ENCODE measurements at regions of chr1 and their contacts with region 1.

Region 1: DNA sequence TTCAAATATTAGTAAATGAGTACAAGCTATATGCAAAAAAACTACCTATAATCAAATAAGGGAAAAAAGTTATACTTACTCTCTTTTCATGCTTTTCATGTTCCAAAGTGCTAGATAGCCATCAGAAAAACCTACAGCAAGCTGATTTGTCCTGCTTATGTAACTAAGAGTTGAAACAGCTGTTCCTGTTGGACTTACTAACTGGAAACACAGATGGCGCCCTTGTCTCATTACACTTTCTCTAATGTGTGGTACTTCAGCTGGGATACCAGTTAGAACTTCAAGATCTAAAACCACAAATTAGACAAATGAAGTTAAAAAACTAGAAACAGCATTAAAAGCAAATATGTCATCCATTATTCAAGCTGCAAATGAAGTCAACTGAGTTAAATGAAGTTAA is 24.3 kb downstream of the AHCTF1 start:
- DNase-seq: peak; percentile 50
- ATAC-seq: no peak
- H3K4me3 ChIP-seq: no peak overlapping the region
- H3K4me3 Mint-ChIP-seq: no peak overlapping the region
- H3K27ac ChIP-seq: no peak overlapping the region
- H3K27ac Mint-ChIP-seq: no peak overlapping the region
- H3K4me1 ChIP-seq: no peaks in the 10 kb centered on the region
- H3K4me1 Mint-ChIP-seq: no peaks in the 10 kb centered on the region
- H3K27me3 ChIP-seq: no peaks in the 10 kb centered on the region
- H3K27me3 Mint-ChIP-seq: no peaks in the 10 kb centered on the region
- CTCF ChIP-seq: peak; percentile 69

Region 2: GRCh38 chr1:246417152-246417812 is 490.2 kb before region 1 on chr1:
- CTCF ChIA-PET with region 1: no interaction called
- POLR2A ChIA-PET with region 1: no interaction called
- intact Hi-C with region 1: no loop called
- DNase-seq: no peak
- ATAC-seq: no peak
- H3K4me3 ChIP-seq: no peak overlapping the region
- H3K4me3 Mint-ChIP-seq: no peak overlapping the region
- H3K27ac ChIP-seq: no peak overlapping the region
- H3K27ac Mint-ChIP-seq: no peak overlapping the region
- H3K4me1 ChIP-seq: no peaks in the 10 kb centered on the region
- H3K4me1 Mint-ChIP-seq: peaks cover 12% of the 10 kb centered on the region
- H3K27me3 ChIP-seq: no peaks in the 10 kb centered on the region
- H3K27me3 Mint-ChIP-seq: no peaks in the 10 kb centered on the region
- CTCF ChIP-seq: no peak

Region 3: DNA sequence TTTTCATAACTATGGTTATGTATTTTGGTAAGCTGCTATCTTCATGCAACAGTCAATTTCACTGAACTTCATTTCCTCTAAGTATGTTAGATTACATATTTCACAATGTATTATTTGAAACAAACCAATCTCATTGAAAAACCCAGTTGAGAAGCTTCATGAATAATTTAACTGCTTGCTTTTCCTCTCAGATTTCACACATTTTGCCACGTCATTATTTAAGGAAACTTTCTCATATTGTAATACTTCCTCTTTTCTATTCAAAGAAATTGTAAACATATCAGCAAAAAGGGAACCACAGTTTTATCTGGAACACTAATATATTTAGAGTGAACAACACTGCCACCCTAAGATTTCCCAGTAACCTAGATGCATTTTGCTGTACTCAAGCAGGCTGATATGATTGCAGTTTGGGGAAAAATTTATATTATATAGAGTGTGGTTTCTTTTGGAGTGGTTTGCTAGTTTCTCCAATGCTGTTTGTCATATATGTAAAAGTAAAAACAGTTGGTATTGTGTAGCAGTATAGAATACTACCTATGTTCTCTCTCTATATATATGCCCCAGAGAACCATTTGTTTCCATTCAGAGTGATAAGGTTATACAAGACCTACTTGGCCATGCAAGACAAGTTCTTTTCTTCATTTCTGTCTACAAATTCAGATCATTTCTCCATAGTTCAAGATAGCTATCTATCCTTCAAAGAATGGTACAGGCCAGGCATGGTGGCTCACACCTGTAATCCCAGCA is 52.6 kb after region 1 on chr1:
- CTCF ChIA-PET with region 1: interaction called, 11 read pairs
- POLR2A ChIA-PET with region 1: no interaction called
- intact Hi-C with region 1: loop called (anchors 1 kb)
- DNase-seq: peak; percentile 65
- ATAC-seq: peak; percentile 76
- H3K4me3 ChIP-seq: peak overlapping the region in 2 of 5 experiments; percentile 6 to 37
- H3K4me3 Mint-ChIP-seq: peak overlapping the region; percentile 66
- H3K27ac ChIP-seq: peak overlapping the region; percentile 2 to 3
- H3K27ac Mint-ChIP-seq: peak overlapping the region; percentile 68
- H3K4me1 ChIP-seq: peaks cover 15 to 23% of the 10 kb centered on the region in 2 donors
- H3K4me1 Mint-ChIP-seq: peaks cover 38% of the 10 kb centered on the region
- H3K27me3 ChIP-seq: no peaks in the 10 kb centered on the region
- H3K27me3 Mint-ChIP-seq: no peaks in the 10 kb centered on the region
- CTCF ChIP-seq: peak; percentile 33

Region 4: GRCh38 chr1:246971090-246971721 is 63.7 kb after region 1 on chr1:
- CTCF ChIA-PET with region 1: interaction called, 27 read pairs
- POLR2A ChIA-PET with region 1: no interaction called
- intact Hi-C with region 1: loop called (anchors 2 kb)
- DNase-seq: peak; percentile 47
- ATAC-seq: no peak
- H3K4me3 ChIP-seq: no peak overlapping the region
- H3K4me3 Mint-ChIP-seq: no peak overlapping the region
- H3K27ac ChIP-seq: no peak overlapping the region
- H3K27ac Mint-ChIP-seq: no peak overlapping the region
- H3K4me1 ChIP-seq: no peaks in the 10 kb centered on the region
- H3K4me1 Mint-ChIP-seq: no peaks in the 10 kb centered on the region
- H3K27me3 ChIP-seq: no peaks in the 10 kb centered on the region
- H3K27me3 Mint-ChIP-seq: no peaks in the 10 kb centered on the region
- CTCF ChIP-seq: peak; percentile 76

Region 5: DNA sequence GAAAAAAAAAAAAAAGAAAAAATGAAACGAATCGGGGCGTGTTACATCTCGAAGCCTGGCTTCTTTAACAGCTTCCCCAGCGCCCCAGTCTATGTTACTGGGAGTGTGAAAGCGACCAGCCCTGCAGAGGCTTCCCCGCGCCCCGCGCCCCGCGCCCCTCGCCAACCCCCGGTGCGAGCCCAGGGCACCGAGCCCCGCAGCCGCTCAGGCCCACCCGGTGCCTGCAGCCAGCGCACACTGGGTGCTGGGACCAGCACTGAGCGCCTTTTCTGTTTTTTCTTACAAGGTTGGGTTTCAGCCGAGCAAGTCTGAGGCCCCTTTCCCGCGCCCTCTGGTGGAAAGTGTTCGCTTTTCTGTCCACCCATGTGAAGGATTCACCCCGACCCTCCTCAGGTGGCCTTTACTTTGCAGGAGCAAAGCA is 466.3 kb after region 1 on chr1:
- CTCF ChIA-PET with region 1: interaction called, 14 read pairs
- POLR2A ChIA-PET with region 1: interaction called, 3 read pairs
- intact Hi-C with region 1: loop called (anchors 5 kb)
- DNase-seq: peak; percentile 66
- ATAC-seq: peak; percentile 71
- H3K4me3 ChIP-seq: peak overlapping the region in 2 of 5 experiments; percentile 32 to 49
- H3K4me3 Mint-ChIP-seq: peak overlapping the region; percentile 41
- H3K27ac ChIP-seq: no peak overlapping the region
- H3K27ac Mint-ChIP-seq: no peak overlapping the region
- H3K4me1 ChIP-seq: peaks cover 0 to 2% of the 10 kb centered on the region in 2 donors
- H3K4me1 Mint-ChIP-seq: peaks cover 7% of the 10 kb centered on the region
- H3K27me3 ChIP-seq: peaks cover 0 to 9% (median 0%) of the 10 kb centered on the region in 4 experiments
- H3K27me3 Mint-ChIP-seq: peaks cover 20% of the 10 kb centered on the region
- CTCF ChIP-seq: peak; percentile 50

Measured in B cell (primary cell).